Activated CD4-positive, alpha-beta T cell treated with anti-CD3 and anti-CD28 coated beads for 36 hours (primary cell): ENCODE measurements at regions of chr20 and their contacts with region 1.

Region 1: GRCh38 chr20:815914-816606 is 17.5 kb upstream of the FAM110A start:
- DNase-seq: peak; percentile 80
- ATAC-seq: peak; percentile 72
- H3K4me3 Mint-ChIP-seq: no peak overlapping the region
- H3K27ac Mint-ChIP-seq: no peak overlapping the region
- H3K4me1 Mint-ChIP-seq: no peaks in the 10 kb centered on the region
- H3K27me3 Mint-ChIP-seq: peaks cover 11% of the 10 kb centered on the region

Region 2: GRCh38 chr20:760751-761417 is 55.2 kb before region 1 on chr20:
- CTCF ChIA-PET with region 1: no interaction called
- POLR2A ChIA-PET with region 1: no interaction called
- intact Hi-C with region 1: loop called in 1 of 2 experiments (anchors 2 kb)
- DNase-seq: peak; percentile 73
- ATAC-seq: peak; percentile 74
- H3K4me3 Mint-ChIP-seq: no peak overlapping the region
- H3K27ac Mint-ChIP-seq: no peak overlapping the region
- H3K4me1 Mint-ChIP-seq: peaks cover 2% of the 10 kb centered on the region
- H3K27me3 Mint-ChIP-seq: peaks cover 8% of the 10 kb centered on the region

Region 3: DNA sequence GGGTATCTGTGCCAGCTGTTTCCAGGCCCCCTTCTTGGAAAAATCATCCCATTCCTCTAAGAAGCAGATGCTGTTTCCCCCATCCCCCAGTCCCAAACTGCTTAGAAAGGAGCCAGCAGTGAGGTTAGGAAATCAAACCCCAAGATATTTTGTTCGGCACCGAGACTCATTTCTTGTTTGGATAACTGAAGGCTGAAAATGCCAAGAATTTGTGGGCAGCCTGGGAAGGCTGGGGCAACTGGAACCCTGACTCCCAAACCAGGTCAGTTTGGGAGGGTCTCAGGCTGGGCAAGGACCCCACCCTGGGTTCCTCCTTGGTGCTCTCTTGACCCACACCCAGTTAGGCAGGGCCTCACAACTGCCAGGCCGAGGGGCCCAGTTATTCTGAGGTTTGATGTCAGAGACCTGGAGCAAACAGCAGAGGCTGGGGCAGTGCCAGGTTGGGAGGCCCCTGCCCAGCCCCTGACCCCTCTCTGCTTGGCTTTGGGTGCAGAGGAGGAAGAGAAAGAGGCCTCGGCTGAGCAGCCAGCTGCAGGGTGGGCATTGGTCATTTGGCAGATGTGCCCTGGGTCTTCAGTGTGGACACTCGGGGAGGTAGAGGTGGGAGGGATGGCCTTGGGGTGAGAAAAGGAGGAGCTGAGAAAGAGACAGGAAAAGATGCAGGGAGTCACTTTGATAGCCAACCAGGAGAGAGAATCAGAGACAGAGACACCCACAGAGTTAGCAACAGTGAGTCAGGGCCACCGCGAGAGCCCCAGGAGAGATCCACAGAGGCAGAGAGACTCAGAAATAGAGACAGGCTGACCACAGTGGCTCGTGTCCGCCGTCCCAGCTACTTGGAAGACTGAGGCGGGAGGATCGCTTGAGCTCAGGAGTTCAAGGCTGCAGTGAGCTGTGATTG is 95.1 kb after region 1 on chr20:
- CTCF ChIA-PET with region 1: interaction called, 5 read pairs
- POLR2A ChIA-PET with region 1: no interaction called
- intact Hi-C with region 1: loop called in 1 of 2 experiments (anchors 5 kb)
- DNase-seq: peak; percentile 14
- ATAC-seq: no peak
- H3K4me3 Mint-ChIP-seq: no peak overlapping the region
- H3K27ac Mint-ChIP-seq: no peak overlapping the region
- H3K4me1 Mint-ChIP-seq: no peaks in the 10 kb centered on the region
- H3K27me3 Mint-ChIP-seq: peaks cover 5% of the 10 kb centered on the region

Region 4: DNA sequence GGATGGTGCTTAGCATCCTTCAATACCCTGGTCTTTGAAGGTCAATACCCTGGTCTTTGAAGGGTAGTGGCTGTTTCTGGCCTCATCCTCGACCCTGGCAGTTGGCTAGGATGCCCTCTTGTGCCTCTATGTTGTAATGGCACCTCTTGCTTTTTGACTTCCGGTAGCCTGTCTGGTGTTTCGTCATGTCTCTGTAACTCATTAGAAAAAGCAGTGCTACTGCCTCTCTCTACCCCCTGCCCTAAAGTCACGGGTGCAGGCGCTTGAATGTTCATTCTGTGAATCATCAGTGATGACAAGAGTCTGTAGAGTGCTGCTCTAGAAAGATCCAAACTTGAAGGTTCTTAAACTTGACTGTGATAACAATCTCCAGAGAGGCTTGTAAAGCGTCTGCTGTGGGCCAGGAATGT is 157.7 kb after region 1 on chr20:
- CTCF ChIA-PET with region 1: interaction called, 6 read pairs
- POLR2A ChIA-PET with region 1: no interaction called
- intact Hi-C with region 1: loop called in 1 of 2 experiments (anchors 1 kb)
- DNase-seq: peak; percentile 63
- ATAC-seq: peak; percentile 95
- H3K4me3 Mint-ChIP-seq: no peak overlapping the region
- H3K27ac Mint-ChIP-seq: peak overlapping the region; percentile 66
- H3K4me1 Mint-ChIP-seq: peaks cover 2% of the 10 kb centered on the region
- H3K27me3 Mint-ChIP-seq: no peaks in the 10 kb centered on the region

Region 5: DNA sequence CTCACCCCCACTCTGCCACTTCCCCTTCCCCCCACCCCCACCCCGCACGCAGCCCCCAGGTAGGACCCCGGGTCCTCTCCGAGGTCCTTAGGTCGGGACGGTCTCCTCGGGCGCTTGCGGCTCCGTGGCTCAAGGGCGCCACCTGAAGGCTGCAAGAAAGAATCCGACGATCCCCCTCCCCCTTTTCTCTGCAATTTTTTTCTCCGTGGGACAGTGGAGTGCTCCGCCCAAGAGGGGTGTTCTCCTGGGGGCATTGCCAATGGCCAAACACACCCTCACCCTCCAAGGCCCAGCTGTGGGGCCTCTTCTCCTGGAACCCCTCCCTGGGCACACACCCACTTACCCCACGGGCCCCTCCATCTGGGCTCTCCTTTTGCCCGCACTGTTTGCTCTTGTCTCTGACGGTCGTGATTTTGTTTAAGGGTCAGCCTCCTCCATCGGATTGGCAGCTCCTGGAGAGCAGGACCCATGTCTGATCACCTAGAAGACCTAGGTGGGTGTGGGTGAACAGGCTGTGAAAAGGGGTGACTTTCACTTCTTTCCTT is 369.8 kb after region 1 on chr20:
- CTCF ChIA-PET with region 1: no interaction called
- POLR2A ChIA-PET with region 1: no interaction called
- intact Hi-C with region 1: loop called in 1 of 2 experiments (anchors 1 kb)
- DNase-seq: peak; percentile 79
- ATAC-seq: peak; percentile 82
- H3K4me3 Mint-ChIP-seq: peak overlapping the region; percentile 32
- H3K27ac Mint-ChIP-seq: no peak overlapping the region
- H3K4me1 Mint-ChIP-seq: peaks cover 6% of the 10 kb centered on the region
- H3K27me3 Mint-ChIP-seq: peaks cover 24% of the 10 kb centered on the region